HEK293 (cell line): ENCODE measurements at regions of chr6 and their contacts with region 1.

Region 1: DNA sequence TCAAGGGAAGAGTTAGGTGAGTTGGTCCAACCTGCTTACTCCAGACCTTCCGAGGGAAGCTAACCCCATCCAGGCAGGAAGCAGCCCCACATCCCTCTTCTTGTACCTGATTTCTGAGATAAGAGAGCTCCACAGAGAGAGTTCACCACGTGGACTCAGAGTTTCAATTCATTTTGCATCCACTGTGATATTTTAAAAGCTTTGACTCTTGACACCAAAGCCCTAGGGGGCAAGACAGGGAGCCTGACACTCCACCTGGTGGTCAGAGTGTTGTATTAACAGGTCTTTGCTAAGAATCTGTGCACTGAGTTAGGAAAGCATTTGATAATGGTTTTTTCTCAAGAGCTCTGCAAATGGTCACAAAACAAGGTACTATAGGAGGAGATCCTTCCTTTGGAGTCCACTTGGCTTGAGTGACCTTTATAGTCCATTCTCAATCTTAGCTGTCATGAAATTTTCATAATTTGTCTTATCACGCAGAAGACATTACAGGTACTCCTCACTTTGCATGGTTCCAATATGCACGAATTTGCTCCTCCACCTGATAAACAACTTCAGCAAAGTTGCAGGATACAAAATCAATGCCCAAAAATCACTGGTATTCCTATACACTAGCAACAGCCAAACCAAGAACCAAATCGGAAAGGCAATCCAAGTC is 56.2 kb upstream of the RIPOR2 start:
- H3K4me3 ChIP-seq: no peak overlapping the region
- H3K27ac ChIP-seq: no peak overlapping the region
- H3K4me1 ChIP-seq: no peaks in the 10 kb centered on the region
- CTCF ChIP-seq: peak; percentile 50; the same call in 1 of the 2 replicates

Region 2: DNA sequence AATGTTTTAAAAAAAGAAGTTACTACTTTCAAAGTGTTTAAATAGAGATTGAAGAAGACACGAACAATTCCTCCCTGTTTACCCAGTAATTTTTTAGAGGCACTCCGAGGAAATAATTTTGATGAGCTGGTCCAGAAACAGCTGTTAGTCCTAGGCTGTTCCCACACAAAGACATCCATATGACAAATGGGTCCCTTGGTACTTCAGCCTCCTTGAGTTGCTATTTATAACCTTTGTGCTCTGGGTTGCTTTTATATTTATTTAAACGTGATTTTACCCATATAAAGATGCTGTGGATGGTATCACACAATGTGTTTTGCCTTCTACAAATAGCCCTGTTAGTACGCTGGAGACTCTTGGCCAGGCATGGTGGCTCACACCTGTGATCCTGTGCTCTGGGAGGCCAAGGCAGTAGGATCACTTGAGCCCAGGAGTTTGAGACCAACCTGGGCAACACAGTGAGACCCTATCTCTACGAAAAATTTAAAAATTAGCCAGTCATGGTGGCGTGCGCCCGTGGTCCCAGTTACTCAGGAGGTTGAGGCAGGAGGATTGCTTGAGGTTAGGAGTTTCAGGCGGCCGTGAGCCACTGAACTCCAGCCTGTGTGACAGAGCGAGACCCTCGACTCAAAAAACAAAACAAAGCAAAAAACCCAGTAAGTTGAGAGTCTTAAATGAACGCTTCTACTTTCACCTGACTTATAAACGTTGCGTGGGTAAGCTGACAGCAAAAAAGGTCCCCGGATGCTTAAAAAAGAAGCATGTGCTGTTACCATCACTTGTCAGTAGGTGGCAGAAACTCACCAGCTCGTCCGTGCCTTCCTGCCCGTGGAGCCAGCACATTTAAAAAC is 136.3 kb before region 1 on chr6:
- CTCF ChIA-PET with region 1: interaction called, 172 read pairs
- POLR2A ChIA-PET with region 1: interaction called, 3 read pairs
- H3K4me3 ChIP-seq: no peak overlapping the region
- H3K27ac ChIP-seq: no peak overlapping the region
- H3K4me1 ChIP-seq: no peaks in the 10 kb centered on the region
- CTCF ChIP-seq: peak; percentile 67; the same call in 1 of the 2 replicates

Region 3: GRCh38 chr6:24933868-24934401 is 58.0 kb before region 1 on chr6:
- CTCF ChIA-PET with region 1: interaction called, 63 read pairs
- POLR2A ChIA-PET with region 1: no interaction called
- H3K4me3 ChIP-seq: no peak overlapping the region
- H3K27ac ChIP-seq: no peak overlapping the region
- H3K4me1 ChIP-seq: no peaks in the 10 kb centered on the region
- CTCF ChIP-seq: no peak

Region 4: DNA sequence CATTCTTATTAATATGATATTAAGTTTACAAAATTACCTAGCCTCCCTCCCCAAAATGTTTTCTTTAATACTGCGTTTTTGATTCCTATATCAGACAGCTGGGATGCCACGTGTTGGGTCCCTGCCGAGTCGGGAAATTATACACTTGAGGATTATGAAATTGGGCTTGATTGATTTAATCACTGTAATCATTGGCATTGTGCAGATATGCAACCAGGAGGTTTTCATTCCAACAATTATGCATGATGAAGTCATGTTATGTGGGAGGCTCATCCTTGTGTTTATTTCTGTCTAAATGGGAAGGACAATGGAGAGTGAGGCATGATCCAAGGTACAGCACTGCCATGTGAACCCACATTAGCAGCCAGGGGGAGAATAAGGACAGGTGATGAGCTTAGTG is 25.6 kb before region 1 on chr6:
- CTCF ChIA-PET with region 1: interaction called, 16 read pairs
- POLR2A ChIA-PET with region 1: no interaction called
- H3K4me3 ChIP-seq: no peak overlapping the region
- H3K27ac ChIP-seq: no peak overlapping the region
- H3K4me1 ChIP-seq: no peaks in the 10 kb centered on the region; the same call in 1 of the 2 replicates
- CTCF ChIP-seq: no peak

Region 5: DNA sequence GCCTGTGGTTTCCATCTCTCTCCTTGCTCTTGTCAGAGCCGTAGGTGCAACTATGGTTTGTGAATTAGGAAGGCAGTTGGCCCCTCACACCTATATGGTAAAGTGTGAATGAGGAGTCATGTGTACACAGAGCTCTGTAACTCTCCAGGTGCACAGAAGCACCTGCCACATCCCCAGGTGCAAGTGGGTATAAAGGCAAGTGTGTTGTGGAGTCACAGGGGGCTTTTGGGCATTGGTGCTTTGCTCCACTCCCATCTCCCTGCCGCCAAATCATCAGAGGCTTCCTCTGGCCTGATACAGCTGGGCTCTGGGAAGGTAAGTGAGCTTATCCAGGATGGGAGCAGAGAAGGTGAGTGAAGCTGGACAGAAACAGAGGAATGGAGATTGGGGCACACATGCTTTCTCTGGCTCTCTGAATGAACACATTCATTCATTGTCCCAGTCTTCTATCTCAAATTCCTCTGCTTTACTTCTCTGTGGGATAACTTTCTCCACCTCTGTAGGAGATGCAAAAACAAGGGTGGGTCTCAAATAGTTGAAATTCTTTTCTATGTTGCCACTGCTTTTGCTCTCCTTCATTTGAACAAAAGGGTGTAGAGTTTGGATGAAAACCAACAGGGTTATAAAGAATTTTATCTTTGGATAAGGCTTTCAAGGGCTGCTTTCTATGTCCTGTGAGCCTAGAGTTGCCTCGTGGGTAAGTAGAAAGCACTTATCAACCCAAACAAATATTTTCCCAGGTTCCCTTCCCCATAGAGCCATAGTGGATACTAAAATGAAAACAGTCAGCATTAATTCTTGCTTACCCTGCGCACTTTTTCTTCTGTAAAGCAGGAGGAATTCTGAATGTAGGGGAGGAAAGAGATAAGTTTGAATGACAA is 11.2 kb before region 1 on chr6:
- CTCF ChIA-PET with region 1: interaction called, 30 read pairs
- POLR2A ChIA-PET with region 1: no interaction called
- H3K4me3 ChIP-seq: no peak overlapping the region
- H3K27ac ChIP-seq: no peak overlapping the region
- H3K4me1 ChIP-seq: peaks cover 2% of the 10 kb centered on the region; the same call in 1 of the 2 replicates
- CTCF ChIP-seq: no peak

Region 6: GRCh38 chr6:25017932-25018567 is 26.1 kb after region 1 on chr6:
- CTCF ChIA-PET with region 1: interaction called, 30 read pairs
- POLR2A ChIA-PET with region 1: no interaction called
- H3K4me3 ChIP-seq: no peak overlapping the region
- H3K27ac ChIP-seq: no peak overlapping the region
- H3K4me1 ChIP-seq: no peaks in the 10 kb centered on the region
- CTCF ChIP-seq: no peak; the same call in 1 of the 2 replicates

Region 7: DNA sequence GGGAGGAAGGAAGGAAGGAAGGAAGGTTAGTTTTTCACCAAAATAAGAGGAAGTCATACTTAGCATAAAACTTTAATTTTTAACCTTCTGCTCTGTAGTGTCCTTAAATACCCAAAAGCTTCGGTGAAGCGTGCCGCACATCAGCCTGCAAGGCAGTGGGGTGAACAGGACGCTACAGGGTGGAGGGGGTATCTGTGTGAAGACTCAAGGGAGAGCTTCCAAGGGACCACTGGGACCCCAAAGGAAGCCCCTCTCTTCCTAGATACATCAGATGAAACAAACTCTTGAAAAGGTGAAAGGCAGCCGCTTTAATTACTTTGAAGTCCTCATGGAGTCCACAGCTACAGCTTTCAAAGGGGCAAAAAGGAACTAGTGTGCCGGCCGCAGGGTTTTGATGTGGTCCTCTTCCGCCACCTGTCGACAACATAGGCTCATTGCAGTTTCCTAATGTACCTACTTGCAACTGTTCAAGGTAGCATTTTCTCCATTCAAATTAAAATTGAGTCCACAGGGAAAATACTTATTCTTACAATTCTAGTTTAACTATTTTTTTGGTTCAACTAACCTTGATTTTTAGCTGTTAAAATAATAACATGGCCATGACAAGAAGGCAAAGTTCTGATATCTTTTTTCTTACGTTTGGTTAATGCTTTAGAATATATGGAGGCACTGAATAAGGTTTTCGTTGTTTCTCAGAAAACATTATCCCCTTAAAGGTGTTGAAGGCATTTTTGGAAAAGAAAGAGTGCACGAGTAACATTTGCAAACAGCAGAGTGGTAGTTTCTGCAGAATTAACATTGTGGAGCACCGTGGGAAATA is 78.8 kb after region 1 on chr6:
- CTCF ChIA-PET with region 1: interaction called, 18 read pairs
- POLR2A ChIA-PET with region 1: no interaction called
- H3K4me3 ChIP-seq: no peak overlapping the region
- H3K27ac ChIP-seq: no peak overlapping the region
- H3K4me1 ChIP-seq: no peaks in the 10 kb centered on the region
- CTCF ChIP-seq: peak; percentile 61

Region 8: GRCh38 chr6:25564943-25565342 is 573.0 kb after region 1 on chr6:
- CTCF ChIA-PET with region 1: no interaction called
- POLR2A ChIA-PET with region 1: no interaction called
- H3K4me3 ChIP-seq: no peak overlapping the region
- H3K27ac ChIP-seq: no peak overlapping the region
- H3K4me1 ChIP-seq: no peaks in the 10 kb centered on the region
- CTCF ChIP-seq: no peak